ENCODE measurements at regions of chr4 and their contacts with region 1.

Region 1: DNA sequence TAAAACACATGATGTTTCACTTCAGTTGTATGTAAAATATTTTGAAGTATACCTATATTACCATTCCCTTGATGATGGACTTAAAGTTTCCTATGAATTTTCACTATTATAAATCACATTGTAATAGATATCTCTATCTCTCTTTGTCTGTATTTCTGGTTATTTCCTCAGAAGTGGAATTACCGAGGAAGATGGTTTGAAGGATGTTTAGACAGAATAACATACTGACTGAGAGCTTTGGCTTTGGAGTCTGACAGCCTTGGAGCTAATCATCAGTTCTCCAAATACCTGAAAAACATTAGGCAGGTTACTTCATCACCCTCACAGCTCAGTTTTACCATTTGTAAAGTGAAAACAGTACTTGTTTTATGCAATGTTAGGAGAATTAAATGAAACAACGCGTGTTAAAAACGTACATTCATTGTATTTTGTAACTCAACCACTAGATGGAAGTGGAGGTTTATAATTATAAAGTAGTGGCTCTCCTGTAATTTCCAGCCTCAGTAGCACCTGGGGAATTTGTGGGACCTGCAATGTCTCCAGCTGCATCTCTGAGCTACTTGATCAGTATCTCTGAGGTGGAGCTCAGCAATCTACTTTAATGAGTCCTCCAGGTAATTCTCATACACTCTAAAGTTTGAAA is 14.3 kb downstream of the JCHAIN start:
- DNase-seq: peak in 1 of 2 experiments; percentile 37
- H3K4me3 ChIP-seq: peak overlapping the region; percentile 27; the same call in 1 of the 2 replicates
- H3K27ac ChIP-seq: no peak overlapping the region
- H3K4me1 ChIP-seq: no peaks in the 10 kb centered on the region
- H3K27me3 ChIP-seq: no peaks in the 10 kb centered on the region
- CTCF ChIP-seq: peak; percentile 64

Region 2: DNA sequence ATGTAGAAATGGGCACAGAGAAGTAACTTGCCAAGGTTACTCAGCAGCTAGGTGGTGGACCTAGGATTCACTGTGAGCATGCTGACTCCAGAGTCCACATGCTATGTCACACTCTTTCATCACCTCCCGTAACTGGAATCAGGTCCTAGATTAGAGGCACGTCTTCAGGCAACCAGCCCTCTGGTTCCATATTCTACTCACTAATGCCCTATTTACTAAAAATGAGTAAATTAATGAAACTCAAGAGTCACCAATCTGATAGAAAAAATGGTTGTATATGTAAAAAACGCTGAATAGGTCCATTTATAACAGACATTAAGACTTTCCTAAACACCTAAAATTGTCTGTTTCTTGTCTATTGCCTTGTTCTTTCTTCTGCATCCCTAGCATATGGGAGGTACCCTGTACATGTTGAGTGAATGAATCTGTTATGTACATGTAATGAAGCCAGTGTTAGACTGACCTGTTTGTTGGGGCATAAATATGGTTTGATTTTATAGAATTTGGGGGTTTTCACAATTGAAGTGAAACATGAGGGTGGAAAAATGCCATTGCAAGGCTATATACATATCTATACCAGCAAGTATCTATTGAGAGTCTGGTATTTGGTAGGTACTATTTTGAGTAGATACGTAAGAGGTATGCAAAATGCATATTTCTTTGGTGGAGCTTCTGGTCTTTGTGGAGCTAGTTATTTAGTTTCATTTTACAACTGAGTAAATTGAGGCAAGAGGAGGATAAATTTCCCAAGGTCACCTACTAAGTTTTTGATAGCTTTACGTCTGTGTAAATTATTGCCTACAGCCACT is 62.3 kb after region 1 on chr4:
- CTCF ChIA-PET with region 1: no interaction called
- POLR2A ChIA-PET with region 1: no interaction called
- intact Hi-C with region 1: no loop called
- DNase-seq: no peak
- H3K4me3 ChIP-seq: no peak overlapping the region
- H3K27ac ChIP-seq: no peak overlapping the region
- H3K4me1 ChIP-seq: peaks cover 9% of the 10 kb centered on the region
- H3K27me3 ChIP-seq: no peaks in the 10 kb centered on the region
- CTCF ChIP-seq: no peak

Region 3: GRCh38 chr4:70908993-70909556 is 257.1 kb after region 1 on chr4:
- CTCF ChIA-PET with region 1: interaction called, 12 read pairs
- POLR2A ChIA-PET with region 1: no interaction called
- intact Hi-C with region 1: no loop called
- DNase-seq: no peak
- H3K4me3 ChIP-seq: no peak overlapping the region
- H3K27ac ChIP-seq: no peak overlapping the region
- H3K4me1 ChIP-seq: no peaks in the 10 kb centered on the region
- H3K27me3 ChIP-seq: no peaks in the 10 kb centered on the region
- CTCF ChIP-seq: no peak

Region 4: DNA sequence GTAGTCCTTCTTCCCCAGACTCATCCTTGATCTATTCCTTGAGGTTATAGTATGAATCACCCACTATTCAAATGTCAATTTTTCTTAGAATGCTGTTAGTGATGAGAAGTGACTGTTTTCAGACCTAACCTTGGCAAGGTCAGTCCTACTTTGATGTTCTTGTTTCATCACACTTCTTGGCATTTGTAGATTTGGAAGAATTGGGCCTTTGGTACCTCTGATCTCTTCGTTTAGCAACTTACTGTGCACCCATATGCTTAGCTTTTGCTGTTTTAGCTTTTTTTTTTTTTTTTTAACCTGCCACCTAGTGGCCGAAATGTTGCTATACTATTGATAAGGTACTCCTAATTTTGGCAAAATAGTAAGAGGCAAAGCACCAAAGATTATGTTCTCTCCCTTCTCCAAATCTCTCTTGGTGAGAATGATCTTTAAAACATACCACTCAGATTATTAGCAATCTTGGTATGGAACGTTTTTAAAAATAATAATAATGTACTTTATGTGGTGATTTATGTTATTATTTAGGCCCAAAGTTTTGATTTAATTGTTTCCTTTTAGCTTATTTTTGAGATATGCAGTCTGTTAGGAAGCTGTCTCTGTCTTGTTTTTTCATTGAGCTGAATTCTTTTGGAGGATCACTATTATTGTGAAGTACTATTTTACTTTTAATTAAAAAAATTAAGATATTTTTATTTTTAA is 358.1 kb after region 1 on chr4:
- CTCF ChIA-PET with region 1: interaction called, 3 read pairs
- POLR2A ChIA-PET with region 1: no interaction called
- intact Hi-C with region 1: loop called (anchors 5 kb)
- DNase-seq: peak in 1 of 2 experiments; percentile 39
- H3K4me3 ChIP-seq: no peak overlapping the region
- H3K27ac ChIP-seq: no peak overlapping the region
- H3K4me1 ChIP-seq: no peaks in the 10 kb centered on the region
- H3K27me3 ChIP-seq: no peaks in the 10 kb centered on the region
- CTCF ChIP-seq: peak; percentile 80